Ascending aorta (tissue), 2 donors: ENCODE measurements at regions of chrX and their contacts with region 1.

Region 1: DNA sequence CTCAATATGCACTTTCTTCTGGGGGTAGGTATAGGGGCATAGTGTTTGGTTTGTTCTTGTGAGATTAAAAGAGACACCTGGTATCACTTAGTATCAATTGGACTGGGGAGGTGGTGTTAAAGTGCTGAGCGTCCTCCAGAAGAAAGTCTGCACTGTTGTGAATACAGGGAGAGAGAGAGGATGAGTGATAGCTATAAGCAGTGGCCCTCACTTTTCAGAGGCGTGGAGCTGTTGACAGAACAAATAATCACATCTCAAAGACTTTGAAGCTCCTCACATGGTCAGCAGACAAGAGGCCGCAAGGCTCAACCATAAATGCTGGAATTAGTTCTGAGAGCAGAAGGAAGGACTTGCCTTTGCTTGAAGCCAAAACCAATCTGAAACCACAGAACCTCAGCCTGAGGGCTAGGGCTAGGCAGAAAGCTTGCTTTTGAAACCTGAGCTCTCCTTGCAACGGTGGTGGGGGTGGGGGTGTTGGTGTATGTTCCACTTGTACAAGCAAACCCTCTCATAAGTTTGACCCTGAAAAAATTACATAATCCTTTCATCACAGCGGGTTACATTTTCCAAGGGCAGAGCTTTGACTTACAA is 123.2 kb upstream of the SCML1 start:
- DNase-seq: no peak
- H3K4me3 ChIP-seq: no peak overlapping the region
- H3K27ac ChIP-seq: no peak overlapping the region
- H3K4me1 ChIP-seq: no peaks in the 10 kb centered on the region
- H3K27me3 ChIP-seq: no peaks in the 10 kb centered on the region
- CTCF ChIP-seq: no peak

Region 2: DNA sequence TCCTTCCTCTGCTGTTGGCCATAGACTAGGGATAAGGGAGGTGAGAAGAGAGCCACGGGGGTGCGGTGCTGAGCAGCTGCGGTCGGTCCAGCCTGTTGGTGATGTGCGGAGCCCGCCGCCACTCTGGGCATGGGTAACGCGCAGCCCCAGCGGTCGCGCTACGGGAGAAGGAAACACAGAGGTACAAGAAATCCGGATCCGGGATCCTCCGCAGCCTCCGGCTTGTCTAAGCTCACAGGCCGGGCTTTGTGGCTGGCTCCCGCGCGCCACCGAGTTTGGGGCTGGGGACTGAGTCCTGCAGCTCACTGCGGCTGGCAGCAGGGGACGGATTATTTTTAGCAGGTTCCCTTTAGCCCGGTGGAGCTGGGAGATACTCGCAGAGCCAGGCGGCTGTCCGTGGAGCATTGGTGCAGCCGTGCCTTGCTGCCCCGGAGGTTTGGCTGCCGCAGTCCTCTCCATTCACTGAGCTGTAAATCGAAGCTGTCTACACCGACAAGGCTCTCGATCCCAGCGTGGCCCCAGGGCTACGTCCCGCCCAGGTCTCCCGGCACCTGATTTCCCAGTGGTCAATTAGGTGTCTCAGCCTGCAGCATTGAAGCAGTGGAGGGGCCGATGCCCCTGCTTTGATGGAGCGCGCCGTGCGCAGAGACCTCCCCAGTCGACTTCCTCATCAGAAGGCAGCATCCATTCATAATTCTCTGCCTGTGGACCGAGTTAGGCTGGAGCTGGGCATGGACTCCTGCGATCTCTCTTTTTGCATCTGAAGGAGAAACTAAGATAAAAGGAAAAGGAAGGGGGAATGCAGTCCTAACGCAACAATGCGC is 41.3 kb after region 1 on chrX:
- intact Hi-C with region 1: loop called (anchors 5 kb)
- DNase-seq: no peak
- H3K4me3 ChIP-seq: peak overlapping the region; percentile 39 to 62
- H3K27ac ChIP-seq: peak overlapping the region in 1 of 2 donors; percentile 27
- H3K4me1 ChIP-seq: peaks cover 2 to 13% of the 10 kb centered on the region in 2 donors
- H3K27me3 ChIP-seq: no peaks in the 10 kb centered on the region
- CTCF ChIP-seq: no peak